BJ (cell line): ENCODE measurements at regions of chr15 and their contacts with region 1.

Region 1: DNA sequence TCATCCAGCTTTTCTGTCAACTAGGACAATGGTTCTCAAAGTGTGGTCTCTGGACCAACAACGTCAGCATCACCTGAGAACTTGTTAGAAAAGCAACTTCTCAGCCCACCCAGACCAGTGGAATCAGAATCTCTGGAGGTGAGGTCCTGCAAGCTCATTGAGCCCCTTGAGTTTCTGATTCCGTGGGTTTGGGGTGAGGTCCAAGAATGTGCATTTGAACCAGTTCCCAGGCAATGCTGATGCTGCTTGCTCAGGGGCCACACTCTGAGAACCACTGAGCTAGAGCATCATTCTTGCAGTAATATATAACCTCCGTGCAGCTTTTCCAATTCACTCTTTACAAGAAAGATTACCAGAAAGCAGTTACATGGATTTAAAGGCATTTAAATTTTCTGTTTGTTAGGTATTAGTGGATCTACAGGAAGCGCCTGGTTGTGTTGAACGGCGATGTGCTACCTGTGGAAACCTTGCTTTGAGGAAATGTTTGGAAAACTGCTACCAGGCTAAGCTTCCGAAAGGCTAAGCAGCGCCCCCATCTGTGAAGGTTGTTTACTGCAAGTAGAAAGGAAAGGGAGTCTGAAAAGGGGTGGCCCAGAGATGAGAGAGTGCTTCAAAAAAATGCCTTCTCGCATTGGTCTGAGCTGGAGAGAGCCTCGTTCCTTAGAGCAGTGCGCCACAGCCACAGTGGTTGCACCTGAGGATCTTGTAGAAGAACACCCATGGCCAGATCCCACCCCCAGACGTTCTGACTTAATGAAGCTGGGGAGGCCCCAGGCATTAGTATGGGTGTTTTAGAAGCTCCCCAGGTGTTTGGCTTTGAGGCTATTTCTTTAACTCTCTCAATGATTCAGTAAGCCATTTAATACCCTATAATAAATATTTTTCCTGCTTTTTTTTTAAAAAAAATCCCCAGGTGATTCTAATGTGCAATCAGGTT is 50.0 kb downstream of the RLBP1 start:
- DNase-seq: no peak
- H3K4me3 ChIP-seq: no peak overlapping the region
- H3K27me3 ChIP-seq: no peaks in the 10 kb centered on the region
- CTCF ChIP-seq: peak; percentile 71

Region 2: GRCh38 chr15:89087830-89088604 is 83.4 kb before region 1 on chr15 and contains the start of gene ABHD2:
- CTCF ChIA-PET with region 1: interaction called, 12 read pairs
- POLR2A ChIA-PET with region 1: no interaction called
- DNase-seq: peak; percentile 100
- H3K4me3 ChIP-seq: peak within 1 kb of the TSS; percentile 85
- H3K27me3 ChIP-seq: no peaks in the 10 kb centered on the region
- CTCF ChIP-seq: no peak
- polyA plus RNA-seq, gene ABHD2: 47.2 and 69.6 TPM in 2 replicates

Region 3: DNA sequence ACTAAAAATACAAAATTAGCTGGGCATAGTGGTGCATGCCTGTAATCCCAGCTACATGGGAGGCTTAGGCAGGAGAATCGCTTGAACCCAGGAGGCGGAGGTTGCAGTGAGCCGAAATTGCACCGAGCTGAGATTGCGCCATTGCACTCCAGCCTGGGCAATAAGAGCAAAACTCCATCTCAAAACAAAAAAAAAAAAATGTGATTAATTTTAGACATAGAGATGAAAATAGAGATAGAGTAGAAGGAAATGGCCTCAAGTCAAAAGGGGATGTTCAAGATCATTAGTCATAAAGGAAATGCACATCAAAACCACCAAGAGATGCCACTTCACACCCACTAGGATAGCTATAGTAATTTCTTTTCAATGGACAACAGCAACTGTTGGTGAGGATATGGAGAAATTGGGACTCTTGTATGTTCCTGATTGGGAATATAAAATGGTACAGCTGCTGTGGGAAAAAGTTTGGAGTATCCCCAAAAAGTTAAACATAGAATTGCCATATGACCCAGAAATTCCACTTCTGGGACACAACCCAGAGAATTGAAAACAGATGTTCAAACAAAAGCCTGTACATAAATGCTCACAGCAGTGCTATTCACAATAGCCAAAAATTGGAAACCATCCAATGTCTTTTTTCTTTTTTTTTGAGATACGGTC is 27.8 kb before region 1 on chr15:
- CTCF ChIA-PET with region 1: interaction called, 10 read pairs
- POLR2A ChIA-PET with region 1: no interaction called
- DNase-seq: peak; percentile 76
- H3K4me3 ChIP-seq: no peak overlapping the region
- H3K27me3 ChIP-seq: no peaks in the 10 kb centered on the region
- CTCF ChIP-seq: no peak

Region 4: GRCh38 chr15:89157918-89158564 is 13.4 kb before region 1 on chr15:
- CTCF ChIA-PET with region 1: interaction called, 12 read pairs
- POLR2A ChIA-PET with region 1: no interaction called
- DNase-seq: no peak
- H3K4me3 ChIP-seq: no peak overlapping the region
- H3K27me3 ChIP-seq: no peaks in the 10 kb centered on the region
- CTCF ChIP-seq: no peak